H1 (cell line): ENCODE measurements at regions of chr13 and their contacts with region 1.

Region 1: GRCh38 chr13:39538816-39539790 is 63.9 kb downstream of the LHFPL6 start:
- DNase-seq: no peak
- H3K4me3 ChIP-seq: no peak overlapping the region
- H3K27ac ChIP-seq: no peak overlapping the region
- H3K4me1 ChIP-seq: no peaks in the 10 kb centered on the region
- H3K27me3 ChIP-seq: no peaks in the 10 kb centered on the region
- CTCF ChIP-seq: no peak
- EP300 ChIP-seq: no peak
- POLR2A ChIP-seq: no peak
- RAD21 ChIP-seq: no peak

Region 2: GRCh38 chr13:39527961-39528660 is 11.0 kb before region 1 on chr13:
- CTCF ChIA-PET with region 1: interaction called, 15 read pairs
- POLR2A ChIA-PET with region 1: interaction called, 5 read pairs
- DNase-seq: no peak
- H3K4me3 ChIP-seq: no peak overlapping the region
- H3K27ac ChIP-seq: no peak overlapping the region
- H3K4me1 ChIP-seq: peaks cover 0 to 3% (median 0%) of the 10 kb centered on the region in 4 experiments; a peak in 1 of 7 replicates
- H3K27me3 ChIP-seq: no peaks in the 10 kb centered on the region
- CTCF ChIP-seq: no peak
- EP300 ChIP-seq: no peak
- POLR2A ChIP-seq: no peak
- RAD21 ChIP-seq: no peak